CD4-positive, alpha-beta memory T cell (primary cell): ENCODE measurements at regions of chr15 and their contacts with region 1.

Region 1: GRCh38 chr15:68820295-68821189 is at the start of gene ANP32A:
- DNase-seq: peak; percentile 94 to 98 (median 95)
- H3K4me3 ChIP-seq: peak within 1 kb of the TSS; percentile 77 to 88
- H3K4me3 Mint-ChIP-seq: peak within 1 kb of the TSS; percentile 93 to 100 (median 98)
- H3K27ac ChIP-seq: peak within 1 kb of the TSS; percentile 91
- H3K27ac Mint-ChIP-seq: peak within 1 kb of the TSS; percentile 93 to 99 (median 98)
- H3K4me1 ChIP-seq: peaks cover 28% of the 10 kb centered on the region
- H3K4me1 Mint-ChIP-seq: peaks cover 20 to 38% (median 23%) of the 10 kb centered on the region in 4 donors
- H3K27me3 ChIP-seq: no peaks in the 10 kb centered on the region
- H3K27me3 Mint-ChIP-seq: no peaks in the 10 kb centered on the region
- total RNA-seq, gene ANP32A: 134 TPM

Region 2: GRCh38 chr15:68783226-68784058 is 37.1 kb before region 1 on chr15:
- CTCF ChIA-PET with region 1: interaction called, 13 read pairs
- POLR2A ChIA-PET with region 1: interaction called, 27 read pairs
- intact Hi-C with region 1: loop called (anchors 2 kb)
- DNase-seq: peak; percentile 58 to 67 (median 60)
- H3K4me3 ChIP-seq: no peak overlapping the region
- H3K4me3 Mint-ChIP-seq: peak overlapping the region in 1 of 8 donors; percentile 8
- H3K27ac ChIP-seq: no peak overlapping the region
- H3K27ac Mint-ChIP-seq: peak overlapping the region in 6 of 7 donors; percentile 12 to 89 (median 74)
- H3K4me1 ChIP-seq: peaks cover 16% of the 10 kb centered on the region
- H3K4me1 Mint-ChIP-seq: peaks cover 18 to 24% (median 21%) of the 10 kb centered on the region in 4 donors
- H3K27me3 ChIP-seq: no peaks in the 10 kb centered on the region
- H3K27me3 Mint-ChIP-seq: no peaks in the 10 kb centered on the region

Region 3: GRCh38 chr15:68795298-68795848 is 25.2 kb before region 1 on chr15:
- CTCF ChIA-PET with region 1: interaction called, 3 read pairs
- POLR2A ChIA-PET with region 1: interaction called, 92 read pairs
- intact Hi-C with region 1: loop called (anchors 1 kb)
- DNase-seq: peak; percentile 57 to 82 (median 62)
- H3K4me3 ChIP-seq: no peak overlapping the region
- H3K4me3 Mint-ChIP-seq: peak overlapping the region; percentile 2 to 80 (median 70)
- H3K27ac ChIP-seq: peak overlapping the region; percentile 32
- H3K27ac Mint-ChIP-seq: peak overlapping the region; percentile 73 to 91 (median 85)
- H3K4me1 ChIP-seq: peaks cover 100% of the 10 kb centered on the region
- H3K4me1 Mint-ChIP-seq: peaks cover 71 to 99% (median 89%) of the 10 kb centered on the region in 4 donors
- H3K27me3 ChIP-seq: no peaks in the 10 kb centered on the region
- H3K27me3 Mint-ChIP-seq: no peaks in the 10 kb centered on the region

Region 4: GRCh38 chr15:68806220-68807060 is 14.1 kb before region 1 on chr15:
- CTCF ChIA-PET with region 1: interaction called, 4 read pairs
- POLR2A ChIA-PET with region 1: interaction called, 18 read pairs
- intact Hi-C with region 1: no loop called
- DNase-seq: no peak
- H3K4me3 ChIP-seq: no peak overlapping the region
- H3K4me3 Mint-ChIP-seq: peak overlapping the region in 1 of 8 donors; percentile 15
- H3K27ac ChIP-seq: no peak overlapping the region
- H3K27ac Mint-ChIP-seq: peak overlapping the region in 4 of 7 donors; percentile 7 to 81 (median 74)
- H3K4me1 ChIP-seq: peaks cover 82% of the 10 kb centered on the region
- H3K4me1 Mint-ChIP-seq: peaks cover 58 to 94% (median 76%) of the 10 kb centered on the region in 4 donors
- H3K27me3 ChIP-seq: no peaks in the 10 kb centered on the region
- H3K27me3 Mint-ChIP-seq: no peaks in the 10 kb centered on the region

Region 5: GRCh38 chr15:69413822-69414700 is 593.5 kb after region 1 on chr15 and contains the start of gene KIF23:
- CTCF ChIA-PET with region 1: no interaction called
- POLR2A ChIA-PET with region 1: no interaction called
- intact Hi-C with region 1: loop called (anchors 10 kb)
- DNase-seq: peak; percentile 90 to 95 (median 91)
- H3K4me3 ChIP-seq: peak within 1 kb of the TSS in 1 of 2 donors; percentile 58
- H3K4me3 Mint-ChIP-seq: peak within 1 kb of the TSS; percentile 85 to 93 (median 86)
- H3K27ac ChIP-seq: peak within 1 kb of the TSS; percentile 37
- H3K27ac Mint-ChIP-seq: peak within 1 kb of the TSS; percentile 48 to 91 (median 74)
- H3K4me1 ChIP-seq: peaks cover 8% of the 10 kb centered on the region
- H3K4me1 Mint-ChIP-seq: peaks cover 6 to 15% (median 12%) of the 10 kb centered on the region in 4 donors
- H3K27me3 ChIP-seq: no peaks in the 10 kb centered on the region
- H3K27me3 Mint-ChIP-seq: peaks cover 5 to 17% of the 10 kb centered on the region in 2 donors
- total RNA-seq, gene KIF23: 0.20 TPM in 1 of 2 experiments, not detected in the other

Region 6: GRCh38 chr15:69468241-69469121 is 647.9 kb after region 1 on chr15:
- CTCF ChIA-PET with region 1: no interaction called
- POLR2A ChIA-PET with region 1: no interaction called
- intact Hi-C with region 1: loop called (anchors 5 kb)
- DNase-seq: peak; percentile 90 to 98 (median 94)
- H3K4me3 ChIP-seq: peak overlapping the region in 1 of 2 donors; percentile 34
- H3K4me3 Mint-ChIP-seq: peak overlapping the region; percentile 50 to 87 (median 78)
- H3K27ac ChIP-seq: peak overlapping the region; percentile 90
- H3K27ac Mint-ChIP-seq: peak overlapping the region; percentile 97 to 100 (median 100)
- H3K4me1 ChIP-seq: peaks cover 41% of the 10 kb centered on the region
- H3K4me1 Mint-ChIP-seq: peaks cover 22 to 50% (median 29%) of the 10 kb centered on the region in 4 donors
- H3K27me3 ChIP-seq: no peaks in the 10 kb centered on the region
- H3K27me3 Mint-ChIP-seq: no peaks in the 10 kb centered on the region